Activated CD4-positive, alpha-beta memory T cell treated with anti-CD3 and anti-CD28 coated beads for 36 hours (primary cell): ENCODE measurements at regions of chr18 and their contacts with region 1.

Region 1: GRCh38 chr18:63161761-63162195 is 157.8 kb downstream of the BCL2 start:
- DNase-seq: peak; percentile 90
- H3K4me3 Mint-ChIP-seq: peak overlapping the region; percentile 78
- H3K27ac Mint-ChIP-seq: peak overlapping the region; percentile 98
- H3K4me1 Mint-ChIP-seq: peaks cover 92% of the 10 kb centered on the region
- H3K27me3 Mint-ChIP-seq: no peaks in the 10 kb centered on the region

Region 2: GRCh38 chr18:62584241-62585120 is 577.3 kb before region 1 on chr18:
- CTCF ChIA-PET with region 1: no interaction called
- POLR2A ChIA-PET with region 1: no interaction called
- intact Hi-C with region 1: loop called (anchors 2 kb)
- DNase-seq: peak; percentile 91
- H3K4me3 Mint-ChIP-seq: no peak overlapping the region
- H3K27ac Mint-ChIP-seq: peak overlapping the region; percentile 94
- H3K4me1 Mint-ChIP-seq: peaks cover 39% of the 10 kb centered on the region
- H3K27me3 Mint-ChIP-seq: no peaks in the 10 kb centered on the region

Region 3: DNA sequence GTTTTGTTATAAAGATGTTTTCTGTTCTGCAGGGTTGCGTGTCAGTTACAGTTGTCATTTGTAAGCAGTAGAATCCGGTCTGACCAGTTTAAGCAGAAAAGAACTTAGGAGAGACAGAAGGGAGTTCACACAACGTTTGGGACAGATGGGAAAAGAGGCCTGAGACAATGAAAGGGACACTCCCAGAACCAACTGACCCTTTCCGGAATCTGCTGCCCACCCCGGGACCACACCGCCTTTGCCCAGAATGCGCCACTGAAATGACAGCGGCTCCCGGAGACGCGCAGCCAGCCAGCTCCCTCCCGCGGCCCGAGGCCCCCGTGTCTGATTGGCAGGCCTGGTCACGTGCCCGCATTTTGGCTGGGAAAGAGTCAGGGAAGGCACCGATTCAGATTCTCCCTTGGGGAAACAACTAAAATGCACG is 86.8 kb before region 1 on chr18:
- CTCF ChIA-PET with region 1: no interaction called
- POLR2A ChIA-PET with region 1: no interaction called
- intact Hi-C with region 1: no loop called
- DNase-seq: peak; percentile 75
- H3K4me3 Mint-ChIP-seq: peak overlapping the region; percentile 78
- H3K27ac Mint-ChIP-seq: no peak overlapping the region
- H3K4me1 Mint-ChIP-seq: peaks cover 11% of the 10 kb centered on the region
- H3K27me3 Mint-ChIP-seq: peaks cover 13% of the 10 kb centered on the region

Region 4: DNA sequence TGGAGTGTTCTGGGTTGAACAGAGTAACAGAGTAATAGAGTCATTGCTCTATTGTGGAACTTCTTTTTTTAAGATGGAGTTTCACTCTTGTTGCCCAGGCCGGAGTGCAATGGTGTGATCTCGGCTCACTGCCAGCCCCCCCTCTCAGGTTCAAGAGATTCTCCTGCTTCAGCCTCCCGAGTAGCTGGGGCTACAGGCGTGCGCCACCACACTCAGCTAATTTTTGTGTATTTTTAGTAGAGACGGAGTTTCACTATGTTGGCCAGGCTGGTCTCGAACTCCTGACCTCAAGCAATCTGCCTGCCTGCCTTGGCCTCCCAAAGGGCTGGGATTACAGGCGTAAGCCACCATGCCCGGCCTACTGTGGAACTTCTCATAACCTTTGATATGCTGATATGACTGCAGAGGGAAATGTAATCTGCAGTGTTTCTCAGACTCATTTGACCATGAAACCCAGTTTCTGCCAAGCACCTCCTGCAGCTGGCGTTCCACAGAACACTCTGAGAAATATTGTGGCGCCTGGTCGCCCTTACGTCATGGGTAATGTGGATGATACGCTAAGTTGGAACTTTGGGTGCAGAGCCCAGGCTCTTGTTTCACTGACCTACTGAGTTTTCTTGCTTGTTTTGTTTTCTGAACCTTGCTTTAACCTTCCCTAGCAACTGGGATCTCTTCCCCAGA is 56.0 kb before region 1 on chr18:
- CTCF ChIA-PET with region 1: no interaction called
- POLR2A ChIA-PET with region 1: no interaction called
- intact Hi-C with region 1: loop called (anchors 2 kb)
- DNase-seq: peak; percentile 31
- H3K4me3 Mint-ChIP-seq: no peak overlapping the region
- H3K27ac Mint-ChIP-seq: no peak overlapping the region
- H3K4me1 Mint-ChIP-seq: peaks cover 33% of the 10 kb centered on the region
- H3K27me3 Mint-ChIP-seq: peaks cover under 1% of the 10 kb centered on the region

Region 5: DNA sequence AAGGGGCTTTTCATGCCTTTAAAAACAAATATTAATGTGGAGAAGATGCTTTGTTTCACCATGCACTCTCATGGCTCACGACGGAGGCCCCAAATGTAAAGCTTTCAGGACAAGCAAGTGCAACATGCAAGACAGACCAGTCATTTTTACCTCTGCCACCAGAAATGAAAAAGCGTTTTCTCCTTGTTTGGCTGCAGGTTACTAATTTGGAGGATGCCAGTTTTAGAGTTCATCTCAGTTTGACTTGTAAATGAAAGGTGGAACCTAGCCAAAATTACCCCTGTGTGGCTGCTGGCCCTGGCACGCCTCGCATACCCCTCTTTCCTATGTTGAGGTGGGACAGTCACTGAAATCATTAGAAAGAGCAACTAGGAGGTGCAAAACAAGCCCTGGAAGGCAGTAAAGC is 19.2 kb after region 1 on chr18:
- CTCF ChIA-PET with region 1: interaction called, 6 read pairs
- POLR2A ChIA-PET with region 1: interaction called, 14 read pairs
- intact Hi-C with region 1: loop called (anchors 1 kb)
- DNase-seq: peak; percentile 73
- H3K4me3 Mint-ChIP-seq: no peak overlapping the region
- H3K27ac Mint-ChIP-seq: peak overlapping the region; percentile 78
- H3K4me1 Mint-ChIP-seq: peaks cover 81% of the 10 kb centered on the region
- H3K27me3 Mint-ChIP-seq: no peaks in the 10 kb centered on the region

Region 6: DNA sequence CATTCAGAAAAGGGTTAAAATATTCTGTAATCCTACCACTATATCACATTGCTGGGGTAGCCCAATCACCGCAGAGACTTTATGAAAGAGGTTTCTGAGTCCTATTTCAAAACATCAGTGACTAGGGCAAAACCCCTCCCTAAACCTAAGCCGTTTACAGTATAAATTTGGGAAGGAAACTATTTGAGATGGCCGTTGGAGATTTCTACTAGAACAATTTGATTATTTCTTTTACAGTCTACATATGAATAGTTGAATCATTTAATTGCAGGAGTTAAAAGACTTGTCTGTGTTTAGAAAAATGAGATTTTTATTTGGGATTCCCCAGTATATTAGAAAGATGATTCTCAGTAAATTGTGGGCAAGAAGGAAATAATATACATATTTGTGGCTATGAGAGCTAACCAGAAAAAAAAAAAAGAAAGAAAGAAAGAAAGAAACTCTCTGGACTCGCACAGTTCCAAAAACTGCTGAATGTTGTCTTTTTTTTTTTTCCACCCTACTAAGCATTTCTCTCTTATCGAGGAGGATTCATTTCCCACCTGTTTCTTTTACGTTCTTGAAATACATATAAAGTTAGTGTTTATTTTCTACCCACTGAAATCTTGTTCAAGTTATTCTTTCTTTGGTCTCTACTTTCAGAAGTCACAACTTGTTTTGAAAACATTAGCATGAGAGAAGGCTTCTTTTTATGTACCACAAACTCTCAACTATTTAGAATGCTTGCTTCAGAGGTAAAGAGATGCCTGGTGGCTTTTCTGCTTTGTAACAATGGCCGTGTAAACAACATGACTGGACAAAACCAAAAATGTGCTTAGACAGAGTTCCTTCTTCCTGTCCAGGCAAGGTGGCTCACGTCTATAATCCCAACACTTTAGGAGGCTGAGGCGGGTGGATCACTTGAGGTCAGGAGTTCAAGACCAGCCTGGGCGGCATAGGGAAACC is 91.9 kb after region 1 on chr18:
- CTCF ChIA-PET with region 1: no interaction called
- POLR2A ChIA-PET with region 1: no interaction called
- intact Hi-C with region 1: loop called (anchors 1 kb)
- DNase-seq: no peak
- H3K4me3 Mint-ChIP-seq: no peak overlapping the region
- H3K27ac Mint-ChIP-seq: peak overlapping the region; percentile 62
- H3K4me1 Mint-ChIP-seq: peaks cover 74% of the 10 kb centered on the region
- H3K27me3 Mint-ChIP-seq: no peaks in the 10 kb centered on the region

Region 7: DNA sequence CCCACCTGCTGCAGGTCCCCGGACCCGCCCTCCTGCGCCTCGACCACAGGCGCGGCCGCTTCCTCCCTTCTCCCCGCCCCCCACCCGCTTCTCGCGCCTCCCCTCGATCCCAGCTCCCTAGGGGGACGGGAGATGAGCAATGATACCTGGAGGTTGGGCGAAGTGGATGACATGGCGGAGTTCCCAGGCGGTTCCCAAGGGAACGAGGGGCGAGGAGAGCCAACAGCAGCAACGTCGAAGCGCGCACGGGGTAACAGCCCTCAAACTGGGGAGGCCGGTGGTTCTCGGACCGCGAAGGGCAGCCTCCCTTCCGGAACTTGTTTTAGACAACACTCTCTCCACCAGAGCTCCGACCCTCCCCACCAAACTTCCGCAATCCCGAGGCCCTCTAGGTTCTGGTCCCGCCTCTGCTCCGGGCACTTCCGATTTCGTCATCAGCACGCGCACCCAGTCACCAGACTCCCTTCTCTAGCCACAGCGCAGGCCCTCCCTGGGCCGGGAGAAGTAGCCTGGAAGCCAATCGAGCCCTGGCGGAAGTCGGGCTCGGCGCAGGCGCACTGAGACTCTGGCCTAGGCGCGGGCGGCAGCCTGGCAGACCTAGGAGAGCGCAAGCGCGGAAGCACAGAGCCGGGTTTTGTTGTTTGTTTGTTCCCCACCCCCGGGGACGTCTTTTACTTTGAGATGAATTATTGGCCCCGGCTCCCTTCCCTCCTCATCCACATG is 260.5 kb after region 1 on chr18 and contains the start of gene VPS4B:
- CTCF ChIA-PET with region 1: no interaction called
- POLR2A ChIA-PET with region 1: no interaction called
- intact Hi-C with region 1: loop called (anchors 1 kb)
- DNase-seq: peak; percentile 100
- H3K4me3 Mint-ChIP-seq: peak within 1 kb of the TSS; percentile 95
- H3K27ac Mint-ChIP-seq: peak within 1 kb of the TSS; percentile 97
- H3K4me1 Mint-ChIP-seq: peaks cover 33% of the 10 kb centered on the region
- H3K27me3 Mint-ChIP-seq: peaks cover 5% of the 10 kb centered on the region
- total RNA-seq, gene VPS4B: 41.7 to 43.3 TPM

Region 8: GRCh38 chr18:63676526-63676925 is 514.7 kb after region 1 on chr18:
- CTCF ChIA-PET with region 1: no interaction called
- POLR2A ChIA-PET with region 1: no interaction called
- intact Hi-C with region 1: no loop called
- DNase-seq: no peak
- H3K4me3 Mint-ChIP-seq: no peak overlapping the region
- H3K27ac Mint-ChIP-seq: no peak overlapping the region
- H3K4me1 Mint-ChIP-seq: no peaks in the 10 kb centered on the region
- H3K27me3 Mint-ChIP-seq: no peaks in the 10 kb centered on the region